HCT116 (cell line): ENCODE measurements at regions of chrX and their contacts with region 1.

Region 1: DNA sequence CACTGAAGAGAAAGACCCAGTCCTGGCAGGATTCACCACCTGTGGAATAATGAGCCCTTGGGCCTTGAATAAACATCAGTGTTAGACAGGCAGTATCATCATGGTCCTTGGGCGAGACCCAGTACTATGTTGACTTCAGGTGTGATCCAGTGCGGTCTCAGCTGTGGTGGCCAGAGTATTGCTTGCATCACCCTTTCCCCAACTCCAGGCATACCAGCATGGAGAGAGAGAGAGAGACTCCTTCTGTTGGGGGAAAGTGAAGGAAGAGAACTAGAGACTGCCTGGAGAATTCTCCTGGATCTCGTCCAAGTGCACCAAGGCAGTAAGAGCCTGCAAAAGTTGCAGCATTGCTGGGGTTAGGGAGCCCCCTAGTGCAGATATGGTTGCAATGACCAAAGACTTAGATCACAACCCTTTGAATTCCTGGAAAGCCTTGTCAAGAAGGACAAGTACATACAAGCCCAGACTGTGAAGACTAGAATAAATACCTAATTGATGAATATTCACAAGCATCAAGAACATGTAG is 61.1 kb upstream of the VAMP7 start:
- DNase-seq: peak; percentile 75
- ATAC-seq: peak; percentile 94
- H3K4me3 ChIP-seq: no peak overlapping the region
- H3K27ac ChIP-seq: no peak overlapping the region
- H3K4me1 ChIP-seq: peaks cover 0 to 5% of the 10 kb centered on the region in 2 experiments; a peak in 1 of 4 replicates
- H3K27me3 ChIP-seq: no peaks in the 10 kb centered on the region
- CTCF ChIP-seq: peak; percentile 58 to 67 (median 62); a peak in 5 of 6 replicates
- POLR2A ChIP-seq: no peak
- RAD21 ChIP-seq: peak; percentile 92

Region 2: DNA sequence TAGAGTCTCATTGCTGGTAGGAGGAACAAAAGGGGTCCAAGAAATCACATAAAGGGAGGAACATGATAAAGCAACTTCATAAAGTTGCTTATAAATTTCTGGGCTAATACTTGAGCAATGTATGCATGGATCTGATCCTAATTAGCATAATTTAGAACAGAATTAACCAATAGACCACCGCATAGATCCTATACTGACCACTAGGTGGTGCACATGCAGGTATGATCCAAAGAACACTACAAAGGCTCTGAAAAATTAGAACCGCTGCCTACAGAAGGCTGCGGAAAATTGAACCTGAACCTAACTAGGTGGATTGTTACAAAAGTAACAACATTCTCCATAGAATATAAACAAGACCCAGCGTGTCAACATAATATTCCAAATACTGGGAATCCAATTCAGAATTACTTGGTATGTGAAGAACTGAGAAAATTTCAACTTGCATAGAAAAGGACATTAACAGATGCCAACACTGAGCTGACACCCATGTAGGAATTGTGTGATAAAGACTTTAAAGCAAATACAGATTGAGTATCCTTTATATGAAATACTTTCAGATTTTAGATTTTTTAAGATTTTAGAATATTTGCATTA is 725.5 kb before region 1 on chrX:
- CTCF ChIA-PET with region 1: no interaction called
- POLR2A ChIA-PET with region 1: no interaction called
- RAD21 ChIA-PET with region 1: no interaction called
- intact Hi-C with region 1: loop called (anchors 2 kb)
- DNase-seq: no peak
- ATAC-seq: peak; percentile 62
- H3K4me3 ChIP-seq: no peak overlapping the region
- H3K27ac ChIP-seq: no peak overlapping the region
- H3K4me1 ChIP-seq: no peaks in the 10 kb centered on the region
- H3K27me3 ChIP-seq: no peaks in the 10 kb centered on the region
- CTCF ChIP-seq: peak; percentile 28 to 70 (median 60); a peak in 5 of 6 replicates
- POLR2A ChIP-seq: no peak
- RAD21 ChIP-seq: peak; percentile 34; the same call in 1 of the 2 replicates